ENCODE measurements at regions of chr6 and their contacts with region 1.

Region 1: DNA sequence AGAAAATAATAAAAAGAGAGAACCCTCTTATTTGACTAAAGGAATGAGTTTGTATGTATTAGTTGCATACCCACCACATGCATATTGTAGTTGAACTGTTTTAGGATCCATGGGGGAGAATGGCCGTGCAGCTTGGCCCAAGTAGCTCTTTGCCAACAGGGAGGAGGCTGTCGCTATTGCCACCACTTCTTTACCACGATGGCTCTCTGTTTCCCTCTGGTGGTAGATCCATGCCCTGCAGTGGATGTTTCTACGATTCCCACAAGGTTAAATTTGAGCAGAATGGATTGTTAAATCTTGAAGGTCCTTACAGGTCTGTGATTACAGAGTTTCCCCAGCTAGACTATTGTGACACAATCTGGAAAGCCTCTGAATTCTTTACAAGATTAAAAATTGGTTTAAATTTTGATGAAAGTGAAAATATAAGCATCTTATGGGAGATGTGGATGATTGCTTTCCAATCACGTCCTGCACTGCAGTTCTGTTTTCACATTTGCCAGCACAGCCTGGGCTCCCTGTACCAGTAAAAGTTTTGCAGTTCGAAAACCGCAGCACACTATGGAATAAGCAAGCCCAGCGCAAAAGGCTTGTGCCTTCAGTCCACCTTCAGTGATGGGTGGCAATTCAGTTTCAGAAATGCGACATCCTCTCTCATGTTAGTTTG is 34.4 kb upstream of the FNDC1 start:
- DNase-seq: peak; percentile 82
- ATAC-seq: peak; percentile 87
- H3K4me3 Mint-ChIP-seq: no peak overlapping the region
- H3K27ac Mint-ChIP-seq: no peak overlapping the region
- H3K4me1 Mint-ChIP-seq: peaks cover 5% of the 10 kb centered on the region
- H3K27me3 Mint-ChIP-seq: peaks cover 18% of the 10 kb centered on the region

Region 2: GRCh38 chr6:158987657-158988056 is 147.2 kb before region 1 on chr6:
- CTCF ChIA-PET with region 1: interaction called, 13 read pairs
- POLR2A ChIA-PET with region 1: no interaction called
- DNase-seq: no peak
- ATAC-seq: no peak
- H3K4me3 Mint-ChIP-seq: no peak overlapping the region
- H3K27ac Mint-ChIP-seq: no peak overlapping the region
- H3K4me1 Mint-ChIP-seq: peaks cover 14% of the 10 kb centered on the region
- H3K27me3 Mint-ChIP-seq: no peaks in the 10 kb centered on the region

Region 3: DNA sequence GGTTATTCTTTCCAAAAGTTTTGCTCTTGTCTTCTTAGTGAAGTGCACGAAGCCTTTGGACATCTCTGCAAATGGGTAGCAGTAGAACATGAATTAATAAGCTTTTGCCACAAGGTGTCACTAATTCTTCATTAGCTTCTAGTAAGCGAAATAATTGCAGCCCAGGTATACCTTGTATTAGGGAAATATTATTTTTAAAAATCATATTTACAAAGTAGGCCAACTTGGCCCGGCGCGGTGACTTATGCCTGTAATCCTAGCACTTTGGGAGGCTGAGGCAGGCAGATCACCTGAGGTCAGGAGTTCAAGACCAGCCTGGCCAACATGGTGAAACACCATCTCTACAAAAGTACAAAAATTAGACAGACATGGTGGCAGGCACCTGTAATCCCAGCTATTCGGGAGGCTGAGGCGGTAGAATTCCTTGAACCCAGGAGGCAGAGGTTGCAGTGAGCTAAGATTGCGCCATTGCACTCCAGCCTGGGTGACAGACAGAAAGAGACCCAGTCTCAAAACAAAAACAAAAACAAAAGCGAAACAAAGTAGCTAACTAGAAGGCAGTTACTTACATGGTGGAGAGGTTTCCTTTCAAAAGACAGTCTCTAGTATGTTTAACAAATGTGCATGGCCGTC is 126.1 kb before region 1 on chr6:
- CTCF ChIA-PET with region 1: interaction called, 196 read pairs
- POLR2A ChIA-PET with region 1: interaction called, 6 read pairs
- DNase-seq: peak; percentile 20
- ATAC-seq: peak; percentile 68
- H3K4me3 Mint-ChIP-seq: peak overlapping the region; percentile 7
- H3K27ac Mint-ChIP-seq: peak overlapping the region; percentile 18
- H3K4me1 Mint-ChIP-seq: peaks cover 19% of the 10 kb centered on the region
- H3K27me3 Mint-ChIP-seq: no peaks in the 10 kb centered on the region

Region 4: DNA sequence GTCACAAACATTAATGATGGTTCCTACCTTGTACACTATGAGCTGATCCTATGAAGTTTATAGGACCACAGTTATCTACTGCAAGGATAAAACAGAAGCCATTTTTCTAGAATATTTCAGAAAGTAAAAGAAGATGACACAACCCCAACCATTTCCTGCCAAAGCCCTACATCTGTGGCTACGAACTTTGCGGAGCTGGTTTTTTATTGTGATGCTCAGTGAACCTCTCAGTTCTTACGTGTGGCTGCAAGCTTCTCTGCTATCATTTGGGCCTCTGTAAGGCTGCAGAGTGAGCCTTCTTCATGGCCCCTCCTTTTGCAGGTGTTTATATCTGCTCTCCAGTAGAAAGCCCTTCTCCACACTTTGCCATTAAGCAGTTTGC is 72.3 kb before region 1 on chr6:
- CTCF ChIA-PET with region 1: interaction called, 11 read pairs
- POLR2A ChIA-PET with region 1: no interaction called
- DNase-seq: peak; percentile 87
- ATAC-seq: peak; percentile 90
- H3K4me3 Mint-ChIP-seq: peak overlapping the region; percentile 55
- H3K27ac Mint-ChIP-seq: peak overlapping the region; percentile 95
- H3K4me1 Mint-ChIP-seq: peaks cover 86% of the 10 kb centered on the region
- H3K27me3 Mint-ChIP-seq: no peaks in the 10 kb centered on the region

Region 5: DNA sequence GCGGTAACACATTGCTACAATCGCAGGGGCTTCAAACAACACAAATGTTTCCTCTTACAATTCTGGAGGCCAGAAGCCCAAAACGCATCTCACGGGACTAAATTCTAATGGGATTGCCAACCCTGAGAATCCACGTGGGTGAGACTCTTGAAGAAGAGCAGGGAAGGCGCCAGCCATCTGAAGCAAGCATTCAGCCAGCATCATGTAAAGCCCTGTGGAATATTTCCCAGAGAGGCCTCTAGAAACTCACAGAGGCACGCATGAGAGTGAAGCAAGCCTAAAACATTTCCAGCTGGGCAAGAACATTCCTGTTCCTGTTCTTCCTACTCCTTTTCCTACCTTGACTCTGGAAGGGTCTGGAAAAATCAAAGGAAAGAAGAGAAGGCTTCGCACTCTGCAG is 14.8 kb after region 1 on chr6:
- CTCF ChIA-PET with region 1: interaction called, 31 read pairs
- POLR2A ChIA-PET with region 1: no interaction called
- DNase-seq: no peak
- ATAC-seq: no peak
- H3K4me3 Mint-ChIP-seq: no peak overlapping the region
- H3K27ac Mint-ChIP-seq: no peak overlapping the region
- H3K4me1 Mint-ChIP-seq: peaks cover 5% of the 10 kb centered on the region
- H3K27me3 Mint-ChIP-seq: peaks cover 25% of the 10 kb centered on the region